Endothelial cell of umbilical vein (primary cell): ENCODE measurements at regions of chr13 and their contacts with region 1.

Region 1: GRCh38 chr13:48334534-48335127 is 31.1 kb downstream of the RB1 start:
- DNase-seq: peak; percentile 71
- H3K4me3 ChIP-seq: no peak overlapping the region
- H3K27ac ChIP-seq: no peak overlapping the region
- H3K4me1 ChIP-seq: no peaks in the 10 kb centered on the region
- H3K27me3 ChIP-seq: no peaks in the 10 kb centered on the region
- CTCF ChIP-seq: peak; percentile 11 to 27
- POLR2A ChIP-seq: no peak

Region 2: DNA sequence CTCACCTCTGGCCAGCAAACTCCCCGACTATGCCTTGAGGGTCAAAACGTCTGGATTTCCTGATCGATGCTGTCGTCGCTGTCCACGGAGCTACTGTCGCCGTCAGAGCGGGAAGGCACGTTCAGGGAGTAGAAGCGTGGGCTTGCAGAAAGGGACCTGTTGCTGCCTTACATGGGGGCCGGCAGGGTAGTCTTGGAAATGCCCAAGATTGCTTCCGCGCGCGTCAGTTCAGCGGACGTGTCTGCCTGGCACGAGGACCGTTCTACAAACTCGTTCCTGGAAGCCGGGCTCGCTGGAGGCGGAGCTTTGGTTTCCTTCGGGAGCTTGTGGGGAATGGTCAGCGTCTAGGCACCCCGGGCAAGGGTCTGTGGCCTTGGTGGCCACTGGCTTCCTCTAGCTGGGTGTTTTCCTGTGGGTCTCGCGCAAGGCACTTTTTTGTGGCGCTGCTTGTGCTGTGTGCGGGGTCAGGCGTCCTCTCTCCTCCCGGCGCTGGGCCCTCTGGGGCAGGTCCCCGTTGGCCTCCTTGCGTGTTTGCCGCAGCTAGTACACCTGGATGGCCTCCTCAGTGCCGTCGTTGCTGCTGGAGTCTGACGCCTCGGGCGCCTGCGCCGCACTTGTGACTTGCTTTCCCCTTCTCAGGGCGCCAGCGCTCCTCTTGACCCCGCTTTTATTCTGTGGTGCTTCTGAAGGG is 15.7 kb before region 1 on chr13:
- CTCF ChIA-PET with region 1: interaction called, 11 read pairs
- POLR2A ChIA-PET with region 1: no interaction called
- dilution Hi-C with region 1: no loop called
- intact Hi-C with region 1: no loop called
- DNase-seq: no peak
- H3K4me3 ChIP-seq: no peak overlapping the region
- H3K27ac ChIP-seq: no peak overlapping the region
- H3K4me1 ChIP-seq: no peaks in the 10 kb centered on the region
- H3K27me3 ChIP-seq: no peaks in the 10 kb centered on the region
- CTCF ChIP-seq: no peak
- POLR2A ChIP-seq: no peak

Region 3: GRCh38 chr13:48346583-48346982 is 12.0 kb after region 1 on chr13:
- CTCF ChIA-PET with region 1: interaction called, 16 read pairs
- POLR2A ChIA-PET with region 1: no interaction called
- dilution Hi-C with region 1: no loop called
- intact Hi-C with region 1: no loop called
- DNase-seq: no peak
- H3K4me3 ChIP-seq: no peak overlapping the region
- H3K27ac ChIP-seq: no peak overlapping the region
- H3K4me1 ChIP-seq: peaks cover 4% of the 10 kb centered on the region
- H3K27me3 ChIP-seq: no peaks in the 10 kb centered on the region
- CTCF ChIP-seq: no peak
- POLR2A ChIP-seq: no peak

Region 4: GRCh38 chr13:48400850-48401291 is 66.2 kb after region 1 on chr13:
- CTCF ChIA-PET with region 1: interaction called, 8 read pairs
- POLR2A ChIA-PET with region 1: no interaction called
- dilution Hi-C with region 1: no loop called
- intact Hi-C with region 1: loop called (anchors 2 kb)
- DNase-seq: peak; percentile 96
- H3K4me3 ChIP-seq: peak overlapping the region in 1 of 3 experiments; percentile 26
- H3K27ac ChIP-seq: peak overlapping the region; percentile 75
- H3K4me1 ChIP-seq: peaks cover 44% of the 10 kb centered on the region
- H3K27me3 ChIP-seq: no peaks in the 10 kb centered on the region
- CTCF ChIP-seq: no peak
- POLR2A ChIP-seq: no peak

Region 5: DNA sequence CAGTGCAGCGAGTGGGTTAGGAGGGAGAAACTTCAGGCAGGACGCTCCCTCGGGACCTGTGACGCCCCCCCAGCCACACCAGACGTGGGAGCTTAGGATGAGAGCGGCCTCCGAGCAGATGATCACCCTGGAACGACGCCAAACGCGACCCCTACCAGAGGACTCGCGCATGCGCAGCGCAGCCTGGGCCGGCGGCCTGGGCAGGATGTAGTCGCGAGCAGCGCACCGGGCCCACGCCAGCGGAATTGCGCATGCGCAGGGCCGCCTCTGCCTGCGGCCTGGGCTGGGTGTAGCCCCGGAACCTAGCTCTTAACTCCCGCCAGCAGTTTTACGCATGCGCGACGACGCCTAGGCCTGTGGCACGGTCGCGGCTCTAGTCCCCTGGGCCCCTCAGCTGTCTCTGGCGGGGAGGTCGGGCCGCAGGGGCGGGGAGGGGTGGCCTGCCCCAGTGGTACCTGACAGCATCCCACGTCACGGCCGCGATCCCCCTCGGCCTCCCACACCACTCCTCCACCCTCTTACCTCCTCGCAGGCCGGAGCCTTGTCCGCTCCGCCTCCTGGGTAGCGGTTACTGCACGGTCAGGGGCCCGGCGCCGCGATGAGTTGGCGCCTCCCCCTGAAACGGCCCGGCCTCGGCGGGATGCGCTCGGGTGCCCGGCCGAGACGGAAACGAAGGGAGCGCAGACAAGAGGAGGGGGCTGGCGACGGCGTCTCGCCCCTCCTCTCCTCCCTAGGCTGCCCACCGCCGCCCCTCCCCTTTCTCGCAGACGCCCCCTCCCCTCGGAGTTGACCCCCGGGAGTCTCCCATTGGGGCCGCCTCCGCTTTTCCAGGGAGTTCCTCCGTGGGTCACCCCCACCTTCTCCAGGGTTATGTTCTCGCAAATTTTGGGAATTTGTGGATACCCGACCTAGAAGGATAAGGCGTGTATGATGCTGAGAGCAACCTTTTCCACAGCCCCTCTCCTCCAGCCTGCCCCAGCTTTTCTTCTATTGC is 198.2 kb after region 1 on chr13 and contains the start of gene RCBTB2:
- CTCF ChIA-PET with region 1: interaction called, 30 read pairs
- POLR2A ChIA-PET with region 1: no interaction called
- dilution Hi-C with region 1: no loop called
- intact Hi-C with region 1: no loop called
- DNase-seq: peak; percentile 99
- H3K4me3 ChIP-seq: peak within 1 kb of the TSS; percentile 74 to 90 (median 78)
- H3K27ac ChIP-seq: peak within 1 kb of the TSS; percentile 73
- H3K4me1 ChIP-seq: peaks cover 10% of the 10 kb centered on the region
- H3K27me3 ChIP-seq: no peaks in the 10 kb centered on the region
- CTCF ChIP-seq: no peak
- POLR2A ChIP-seq: peak; percentile 95
- total RNA-seq, gene RCBTB2: 9.9 and 12.6 TPM in 2 replicates

Region 6: DNA sequence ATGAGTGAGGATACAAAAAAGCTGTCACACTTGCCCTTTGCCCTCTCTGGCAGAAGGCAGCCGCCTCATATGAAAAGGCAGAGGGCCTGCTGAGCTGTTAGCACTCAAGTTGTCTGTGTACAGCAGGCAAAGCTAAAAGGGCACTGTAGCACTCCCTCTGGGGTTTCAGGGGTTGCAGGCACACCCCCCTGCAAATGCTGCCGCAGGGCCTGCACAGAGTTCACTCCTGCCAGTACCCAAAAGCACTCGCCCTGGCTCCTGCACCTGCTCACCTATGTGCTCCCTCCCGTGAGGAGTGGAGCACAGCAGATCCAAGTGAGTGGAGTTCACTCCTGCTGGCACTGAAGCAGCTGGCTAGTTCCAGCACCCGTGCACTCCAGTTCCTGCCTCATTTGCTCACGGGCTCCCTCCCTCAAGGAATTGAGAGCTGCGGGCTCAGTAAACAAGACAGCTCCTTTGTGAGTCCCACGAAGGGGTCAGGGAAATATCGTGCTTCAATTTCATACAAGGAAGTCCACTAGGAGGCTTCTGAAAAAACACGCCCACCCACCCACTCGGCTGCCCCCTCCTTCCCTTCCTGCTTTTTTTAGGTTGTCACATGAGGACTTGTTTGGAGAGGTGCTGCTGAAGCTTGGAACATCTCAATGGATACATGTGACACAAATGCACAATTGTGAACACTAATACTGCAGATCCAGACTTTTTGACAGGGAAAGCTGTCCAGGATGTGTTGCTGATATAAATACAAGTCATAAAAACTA is 208.1 kb after region 1 on chr13:
- CTCF ChIA-PET with region 1: interaction called, 10 read pairs
- POLR2A ChIA-PET with region 1: no interaction called
- dilution Hi-C with region 1: no loop called
- intact Hi-C with region 1: no loop called
- DNase-seq: peak; percentile 86
- H3K4me3 ChIP-seq: no peak overlapping the region
- H3K27ac ChIP-seq: no peak overlapping the region
- H3K4me1 ChIP-seq: no peaks in the 10 kb centered on the region
- H3K27me3 ChIP-seq: no peaks in the 10 kb centered on the region
- CTCF ChIP-seq: peak in 1 of 2 donors; percentile 52
- POLR2A ChIP-seq: no peak

Region 7: GRCh38 chr13:48731957-48732569 is 397.4 kb after region 1 on chr13:
- CTCF ChIA-PET with region 1: interaction called, 10 read pairs
- POLR2A ChIA-PET with region 1: no interaction called
- dilution Hi-C with region 1: no loop called
- intact Hi-C with region 1: loop called (anchors 1 kb)
- DNase-seq: peak; percentile 59
- H3K4me3 ChIP-seq: no peak overlapping the region
- H3K27ac ChIP-seq: no peak overlapping the region
- H3K4me1 ChIP-seq: no peaks in the 10 kb centered on the region
- H3K27me3 ChIP-seq: peaks cover 9% of the 10 kb centered on the region in 2 experiments
- CTCF ChIP-seq: peak; percentile 76 to 91
- POLR2A ChIP-seq: no peak